ENCODE measurements at regions of chr10 and their contacts with region 1.

Region 1: GRCh38 chr10:23067939-23068775 is 27.2 kb upstream of the MSRB2 start:
- DNase-seq: no peak
- H3K4me3 ChIP-seq: no peak overlapping the region
- H3K27ac ChIP-seq: peak overlapping the region in 1 of 4 donors; percentile 10
- H3K4me1 ChIP-seq: peaks cover 8 to 33% (median 10%) of the 10 kb centered on the region in 3 donors
- H3K27me3 ChIP-seq: no peaks in the 10 kb centered on the region
- CTCF ChIP-seq: peak; percentile 50 to 91 (median 66)
- POLR2A ChIP-seq: no peak

Region 2: GRCh38 chr10:22997102-22997501 is 71.1 kb before region 1 on chr10:
- intact Hi-C with region 1: loop called (anchors 10 kb)
- DNase-seq: no peak
- H3K4me3 ChIP-seq: no peak overlapping the region
- H3K27ac ChIP-seq: no peak overlapping the region
- H3K4me1 ChIP-seq: no peaks in the 10 kb centered on the region
- H3K27me3 ChIP-seq: peaks cover 0 to 27% (median 2%) of the 10 kb centered on the region in 4 donors
- CTCF ChIP-seq: no peak
- POLR2A ChIP-seq: no peak

Region 3: DNA sequence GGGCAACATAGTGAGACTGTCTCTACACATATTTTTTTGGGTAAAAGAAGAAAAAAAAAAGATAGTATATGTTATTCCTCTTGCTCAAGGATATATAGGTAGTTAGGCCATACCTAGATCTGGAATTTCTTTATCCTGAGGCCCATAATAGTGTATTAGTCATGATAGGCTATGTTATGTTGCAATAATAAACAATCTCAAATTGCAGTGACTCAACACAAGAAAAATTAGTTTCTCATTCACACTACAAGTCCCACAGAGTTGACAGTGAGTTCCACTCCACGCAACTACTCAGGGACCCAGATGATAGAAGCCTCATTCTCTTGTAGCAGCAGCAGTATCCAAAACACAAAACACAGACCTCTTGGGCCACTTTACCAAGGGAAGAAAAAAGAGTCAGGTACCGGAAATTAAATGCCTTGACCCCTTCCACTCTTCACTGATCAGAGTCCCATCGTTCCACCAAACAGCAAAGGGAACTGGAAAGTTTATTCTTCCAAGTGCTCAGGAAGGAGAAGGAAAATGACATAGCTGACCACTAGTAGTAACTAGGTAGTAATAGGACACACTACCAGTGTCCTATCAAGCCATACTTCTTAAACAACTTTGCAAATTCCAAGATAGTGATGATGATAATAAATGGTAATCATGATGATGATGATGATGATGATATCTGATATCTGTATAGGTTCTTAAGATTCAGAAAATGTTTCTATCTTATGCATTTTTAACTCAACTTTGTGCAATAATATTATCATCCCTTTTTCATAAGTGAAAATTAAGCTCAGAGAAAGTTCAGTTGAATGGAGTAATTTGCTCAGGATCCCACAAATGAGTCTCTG is 284.0 kb after region 1 on chr10:
- intact Hi-C with region 1: no loop called
- DNase-seq: no peak
- H3K4me3 ChIP-seq: no peak overlapping the region
- H3K27ac ChIP-seq: no peak overlapping the region
- H3K4me1 ChIP-seq: peaks cover 0 to 17% (median 0%) of the 10 kb centered on the region in 3 donors
- H3K27me3 ChIP-seq: no peaks in the 10 kb centered on the region
- CTCF ChIP-seq: no peak
- POLR2A ChIP-seq: no peak